Vagina (tissue), 2 donors: ENCODE measurements at regions of chr1 and their contacts with region 1.

Region 1: GRCh38 chr1:151156515-151156819 is at the start of gene TNFAIP8L2:
- DNase-seq: no peak
- H3K4me3 ChIP-seq: peak within 1 kb of the TSS; percentile 12 to 21
- H3K27ac ChIP-seq: no peak within 1 kb of the TSS
- H3K4me1 ChIP-seq: peaks cover 8% of the 10 kb centered on the region
- H3K27me3 ChIP-seq: no peaks in the 10 kb centered on the region
- CTCF ChIP-seq: no peak
- POLR2A ChIP-seq: no peak
- total RNA-seq, gene TNFAIP8L2: 7.6 TPM

Region 2: DNA sequence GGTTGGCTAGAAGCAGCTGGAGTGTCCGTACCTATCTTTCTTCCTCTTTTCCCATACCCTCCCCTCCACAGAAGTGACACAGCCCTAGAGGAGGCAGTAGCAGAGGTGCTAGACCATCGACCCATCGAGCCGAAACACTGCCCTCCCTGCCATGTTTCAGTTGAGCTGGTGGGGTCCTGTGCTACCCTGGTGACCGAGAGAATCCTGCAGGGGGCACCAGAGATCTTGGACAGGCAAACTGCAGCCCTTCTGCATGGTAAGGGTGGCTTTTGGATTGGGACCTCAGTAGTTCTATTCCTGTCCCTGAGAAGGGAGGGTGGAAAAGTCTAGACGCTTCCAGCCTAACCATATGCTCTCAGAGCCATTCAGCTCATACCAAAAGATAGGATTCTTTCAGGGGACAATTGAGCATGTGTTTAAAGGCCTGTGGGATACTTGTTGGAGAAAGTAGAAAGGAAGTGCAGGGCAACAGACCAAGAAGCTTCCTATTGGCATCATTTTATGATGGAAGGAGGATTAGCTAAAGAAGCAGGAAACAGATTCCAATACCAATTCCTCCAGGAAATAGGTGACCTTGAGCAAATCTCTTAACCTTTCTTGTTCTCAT is 131.8 kb before region 1 on chr1:
- intact Hi-C with region 1: loop called (anchors 5 kb)
- DNase-seq: no peak
- H3K4me3 ChIP-seq: no peak overlapping the region
- H3K27ac ChIP-seq: peak overlapping the region; percentile 23
- H3K4me1 ChIP-seq: peaks cover 9% of the 10 kb centered on the region
- H3K27me3 ChIP-seq: no peaks in the 10 kb centered on the region
- CTCF ChIP-seq: peak; percentile 23 to 70 (median 68)
- POLR2A ChIP-seq: no peak

Region 3: GRCh38 chr1:151104630-151105029 is 51.8 kb before region 1 on chr1:
- intact Hi-C with region 1: loop called (anchors 5 kb)
- DNase-seq: no peak
- H3K4me3 ChIP-seq: no peak overlapping the region
- H3K27ac ChIP-seq: no peak overlapping the region
- H3K4me1 ChIP-seq: no peaks in the 10 kb centered on the region
- H3K27me3 ChIP-seq: no peaks in the 10 kb centered on the region
- CTCF ChIP-seq: no peak
- POLR2A ChIP-seq: no peak

Region 4: GRCh38 chr1:151238467-151238739 is 81.9 kb after region 1 on chr1:
- intact Hi-C with region 1: no loop called
- DNase-seq: no peak
- H3K4me3 ChIP-seq: no peak overlapping the region
- H3K27ac ChIP-seq: no peak overlapping the region
- H3K4me1 ChIP-seq: no peaks in the 10 kb centered on the region
- H3K27me3 ChIP-seq: no peaks in the 10 kb centered on the region
- CTCF ChIP-seq: no peak
- POLR2A ChIP-seq: no peak